ENCODE measurements at regions of chr6 and their contacts with region 1.

Region 1: DNA sequence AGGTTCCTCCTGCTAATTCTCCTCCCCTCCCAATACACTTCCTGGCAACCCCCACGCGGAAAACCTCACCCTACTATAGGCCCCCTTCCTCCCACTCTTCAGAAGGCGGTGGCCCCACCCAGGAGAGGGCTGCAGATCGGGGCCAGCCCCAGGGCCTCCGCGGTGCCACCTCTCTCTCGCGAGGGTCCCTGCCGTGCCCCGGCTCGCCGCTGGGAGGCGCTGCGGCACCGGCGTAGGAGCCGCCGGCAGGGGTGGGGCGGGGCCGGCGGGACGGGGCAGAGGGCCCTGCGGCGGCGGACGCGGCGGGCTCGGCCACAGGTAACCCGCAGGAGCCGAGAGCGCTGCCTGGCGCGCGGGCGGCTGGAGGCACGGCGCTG is at the start of gene ANKRD6:
- DNase-seq: peak in 1 of 2 donors; percentile 85
- H3K4me3 ChIP-seq: peak within 1 kb of the TSS; percentile 85 to 97
- H3K27ac ChIP-seq: peak within 1 kb of the TSS; percentile 52 to 69
- H3K4me1 ChIP-seq: peaks cover 3 to 10% of the 10 kb centered on the region in 2 donors
- H3K27me3 ChIP-seq: no peaks in the 10 kb centered on the region
- CTCF ChIP-seq: peak; percentile 74 to 98 (median 83)
- total RNA-seq, gene ANKRD6: 32.2 TPM

Region 2: GRCh38 chr6:88454658-88455224 is 978.1 kb before region 1 on chr6:
- intact Hi-C with region 1: no loop called
- DNase-seq: no peak
- H3K4me3 ChIP-seq: no peak overlapping the region
- H3K27ac ChIP-seq: no peak overlapping the region
- H3K4me1 ChIP-seq: peaks cover 0 to 3% of the 10 kb centered on the region in 2 donors
- H3K27me3 ChIP-seq: no peaks in the 10 kb centered on the region
- CTCF ChIP-seq: no peak

Region 3: DNA sequence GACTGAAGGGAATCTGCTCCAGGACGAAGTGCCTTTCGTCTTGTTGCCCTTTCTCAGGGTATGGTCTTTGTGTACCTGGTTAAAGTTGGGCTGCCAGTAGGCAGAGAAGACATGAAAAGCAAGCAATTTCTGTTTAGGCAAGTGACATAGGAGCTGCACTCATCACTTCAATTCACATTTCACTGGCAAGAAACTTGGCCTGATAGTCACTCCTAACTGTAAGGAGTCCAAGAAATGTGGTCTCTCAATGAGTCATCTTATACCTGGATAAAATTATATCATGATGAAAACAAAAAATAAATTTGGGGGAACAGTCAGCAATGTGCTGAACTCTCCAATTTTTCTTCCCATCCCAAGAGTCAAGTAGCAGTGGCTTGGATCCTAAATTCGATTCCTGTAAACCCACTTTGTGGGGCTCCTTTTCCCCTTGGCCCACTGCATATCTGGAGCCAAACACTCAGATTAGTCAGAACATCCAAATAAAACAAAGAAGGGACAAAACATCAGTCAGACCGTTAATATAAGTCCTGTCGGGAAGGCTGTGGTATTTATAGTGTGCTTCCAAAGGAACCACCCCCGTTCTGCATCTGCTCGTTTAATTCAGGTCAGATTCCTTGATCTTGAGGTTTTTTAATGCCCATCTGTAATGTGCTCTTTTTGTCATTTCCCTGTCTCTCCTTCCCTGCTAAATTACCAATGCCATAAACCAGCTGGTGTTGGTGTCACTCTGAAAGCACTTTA is 210.7 kb before region 1 on chr6:
- intact Hi-C with region 1: no loop called
- DNase-seq: no peak
- H3K4me3 ChIP-seq: peak overlapping the region; percentile 25 to 32
- H3K27ac ChIP-seq: peak overlapping the region; percentile 67 to 80
- H3K4me1 ChIP-seq: peaks cover 0 to 16% of the 10 kb centered on the region in 2 donors
- H3K27me3 ChIP-seq: no peaks in the 10 kb centered on the region
- CTCF ChIP-seq: no peak

Region 4: DNA sequence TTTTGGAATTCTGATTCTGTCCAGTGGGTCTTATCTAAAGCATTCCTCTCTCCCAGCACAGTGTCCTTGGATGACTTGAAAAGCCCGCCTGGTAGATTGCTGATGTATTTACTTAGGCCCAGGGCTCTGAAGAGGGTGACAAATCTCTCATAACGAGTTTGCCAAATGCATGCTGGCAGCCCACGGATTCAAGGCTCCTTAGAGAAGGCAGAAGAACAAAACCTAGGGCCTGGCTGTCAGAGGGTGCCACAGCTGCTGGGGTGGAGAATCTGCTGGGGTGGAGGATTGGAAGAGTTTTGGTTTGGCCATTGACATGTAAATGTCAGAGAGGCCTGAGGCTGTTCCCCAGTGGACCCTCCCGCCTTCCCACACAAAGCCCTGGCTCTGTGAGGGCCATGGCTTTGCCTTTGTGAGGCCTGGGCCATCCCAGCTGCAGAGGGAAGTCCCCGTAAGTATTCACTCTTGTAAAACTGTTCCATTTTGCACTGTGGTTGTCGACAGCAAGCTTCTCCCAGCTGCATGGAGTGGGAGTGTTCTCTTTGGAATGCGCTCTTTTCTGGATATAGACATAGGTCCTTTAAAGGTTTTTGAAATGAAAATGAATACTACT is 50.4 kb after region 1 on chr6:
- intact Hi-C with region 1: loop called (anchors 1 kb)
- DNase-seq: peak in 1 of 2 donors; percentile 75
- H3K4me3 ChIP-seq: peak overlapping the region in 1 of 2 donors; percentile 42
- H3K27ac ChIP-seq: peak overlapping the region; percentile 70 to 77
- H3K4me1 ChIP-seq: peaks cover 20 to 52% of the 10 kb centered on the region in 2 donors
- H3K27me3 ChIP-seq: no peaks in the 10 kb centered on the region
- CTCF ChIP-seq: no peak

Region 5: DNA sequence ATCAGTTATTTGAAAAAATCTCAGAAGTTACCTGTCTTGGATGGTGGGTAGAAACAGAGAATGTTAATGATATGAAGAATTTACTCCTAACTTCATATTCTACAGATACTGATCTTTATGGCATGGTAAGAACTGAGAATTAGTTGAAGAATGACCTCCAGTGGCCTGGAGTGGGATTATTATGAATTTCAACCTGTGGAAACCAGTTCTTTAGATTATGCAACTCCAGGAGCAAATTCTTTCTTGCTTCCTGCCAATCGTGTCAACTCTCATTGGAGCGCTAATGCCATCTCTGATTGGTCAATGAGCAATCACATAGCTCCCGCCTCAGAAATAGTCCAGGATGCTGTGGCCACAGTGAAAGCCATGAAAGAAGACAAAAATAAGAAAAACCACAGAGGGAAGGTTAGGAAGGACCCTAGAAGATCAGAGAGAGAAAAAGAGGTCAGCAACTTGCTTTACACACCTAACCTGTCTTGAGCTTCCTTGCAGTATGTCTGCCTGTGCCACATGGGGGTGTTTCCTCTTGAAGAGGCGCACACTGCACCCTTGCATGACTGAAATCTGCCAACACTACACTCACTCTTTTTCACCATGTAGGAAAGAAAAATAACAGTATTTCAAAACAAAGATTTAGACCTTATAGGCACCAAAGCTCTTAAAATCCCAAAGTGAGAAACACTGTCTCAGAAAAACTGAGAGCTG is 165.3 kb after region 1 on chr6:
- intact Hi-C with region 1: loop called (anchors 1 kb)
- DNase-seq: peak in 1 of 2 donors; percentile 66
- H3K4me3 ChIP-seq: no peak overlapping the region
- H3K27ac ChIP-seq: peak overlapping the region in 1 of 2 donors; percentile 3
- H3K4me1 ChIP-seq: peaks cover 3 to 10% of the 10 kb centered on the region in 2 donors
- H3K27me3 ChIP-seq: no peaks in the 10 kb centered on the region
- CTCF ChIP-seq: peak; percentile 23 to 44 (median 37)

Region 6: DNA sequence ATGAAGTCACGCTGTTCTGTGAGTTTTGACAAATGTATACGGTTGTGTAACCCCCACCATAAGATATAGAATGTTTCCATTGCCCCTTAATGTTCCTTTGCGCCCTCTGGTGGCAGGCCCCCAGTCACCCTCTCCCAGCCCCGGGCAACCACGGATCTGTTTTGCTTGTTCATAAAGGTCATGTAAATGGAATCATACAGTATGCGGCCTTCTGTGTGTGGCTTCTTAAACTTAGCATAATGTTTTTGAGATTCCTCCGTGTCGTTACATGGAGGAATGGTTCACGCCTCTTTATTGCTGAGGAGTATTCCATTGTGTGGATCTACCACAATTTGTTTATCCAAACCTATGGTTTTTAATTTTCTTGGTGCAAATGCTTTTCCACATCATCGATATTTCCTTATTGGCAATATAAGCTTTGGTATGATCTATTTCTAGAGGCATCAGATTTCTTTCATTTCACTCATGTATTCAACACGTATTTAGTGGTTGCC is 177.3 kb after region 1 on chr6:
- intact Hi-C with region 1: loop called (anchors 1 kb)
- DNase-seq: peak in 1 of 2 donors; percentile 78
- H3K4me3 ChIP-seq: no peak overlapping the region
- H3K27ac ChIP-seq: no peak overlapping the region
- H3K4me1 ChIP-seq: no peaks in the 10 kb centered on the region
- H3K27me3 ChIP-seq: no peaks in the 10 kb centered on the region
- CTCF ChIP-seq: peak; percentile 67 to 82 (median 73)

Region 7: DNA sequence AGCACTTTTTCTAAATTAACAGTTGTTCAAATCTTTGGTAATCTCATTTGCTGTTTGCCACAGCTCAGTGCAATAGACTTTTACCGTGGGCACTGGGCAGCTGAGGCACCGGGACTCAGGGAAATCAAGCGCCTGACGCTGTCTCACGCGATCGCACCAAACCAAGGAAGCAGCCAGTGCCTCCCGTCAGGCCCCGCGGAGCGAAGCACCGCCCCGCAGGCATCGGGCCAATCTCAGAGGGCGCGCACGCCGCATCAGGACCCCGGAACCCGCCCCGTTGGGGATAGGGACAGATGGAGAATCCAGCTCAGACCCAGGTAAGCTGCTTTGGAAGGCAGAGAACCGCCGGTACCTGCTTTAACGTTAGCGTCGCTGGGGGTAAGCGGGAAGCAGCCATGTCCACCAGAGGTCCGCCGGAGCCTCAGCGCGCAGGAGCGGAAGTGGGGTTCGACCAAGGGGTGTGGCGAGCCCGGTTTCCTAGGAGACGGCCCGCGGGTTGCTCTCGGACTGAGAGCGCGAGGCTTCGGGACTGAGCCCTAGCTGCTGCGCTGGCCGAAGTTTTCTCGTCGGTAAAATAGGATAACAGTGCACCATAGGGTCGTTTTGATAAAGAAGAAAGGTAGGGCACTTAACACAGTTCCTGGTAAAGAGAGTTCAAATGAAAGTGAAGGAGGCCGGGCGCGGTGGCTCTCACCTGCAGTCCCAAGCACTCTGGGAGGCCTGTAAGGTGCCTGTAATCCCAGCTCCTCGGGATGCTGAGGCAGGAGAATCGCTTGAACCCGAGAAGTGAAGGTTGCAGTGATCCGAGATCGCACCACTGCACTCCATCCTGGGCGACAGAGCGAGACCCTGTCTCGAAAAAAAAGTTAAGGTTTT is 205.7 kb after region 1 on chr6 and contains the start of gene LYRM2:
- intact Hi-C with region 1: loop called (anchors 1 kb)
- DNase-seq: peak; percentile 76 to 96
- H3K4me3 ChIP-seq: peak within 1 kb of the TSS; percentile 56 to 72
- H3K27ac ChIP-seq: peak within 1 kb of the TSS; percentile 84 to 89
- H3K4me1 ChIP-seq: peaks cover 6 to 9% of the 10 kb centered on the region in 2 donors
- H3K27me3 ChIP-seq: no peaks in the 10 kb centered on the region
- CTCF ChIP-seq: peak in 1 of 3 experiments; percentile 10
- total RNA-seq, gene LYRM2: 5.6 TPM